ENCODE measurements at regions of chr18 and their contacts with region 1.

Region 1: DNA sequence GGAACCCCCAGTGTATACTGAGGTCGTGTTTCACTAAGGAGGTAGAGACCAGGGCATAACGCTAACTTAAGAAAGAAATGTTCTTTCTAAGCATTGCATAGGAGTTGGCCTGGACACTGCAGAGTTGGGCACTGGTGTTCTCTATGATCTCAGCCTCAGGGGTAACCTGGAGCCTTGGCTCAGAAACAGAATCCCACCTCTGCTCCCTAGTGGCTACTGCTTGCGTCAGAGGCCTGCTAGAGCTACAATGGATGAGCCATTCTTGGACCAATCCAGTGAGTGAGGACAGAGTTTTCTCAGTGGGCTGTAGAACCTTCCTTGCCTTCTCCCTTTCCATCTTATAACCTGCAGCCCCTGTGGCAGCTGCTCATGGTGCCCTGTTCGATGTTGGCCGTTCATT is 324.4 kb upstream of the CELF4 start:
- DNase-seq: no peak
- ATAC-seq: no peak
- H3K4me3 ChIP-seq: no peak overlapping the region
- H3K27ac ChIP-seq: no peak overlapping the region
- H3K4me1 ChIP-seq: no peaks in the 10 kb centered on the region
- H3K27me3 ChIP-seq: no peaks in the 10 kb centered on the region

Region 2: GRCh38 chr18:37962316-37962966 is 72.5 kb after region 1 on chr18:
- intact Hi-C with region 1: loop called in 1 of 4 experiments (anchors 10 kb)
- DNase-seq: no peak
- ATAC-seq: no peak
- H3K4me3 ChIP-seq: no peak overlapping the region
- H3K27ac ChIP-seq: no peak overlapping the region
- H3K4me1 ChIP-seq: no peaks in the 10 kb centered on the region
- H3K27me3 ChIP-seq: no peaks in the 10 kb centered on the region

Region 3: DNA sequence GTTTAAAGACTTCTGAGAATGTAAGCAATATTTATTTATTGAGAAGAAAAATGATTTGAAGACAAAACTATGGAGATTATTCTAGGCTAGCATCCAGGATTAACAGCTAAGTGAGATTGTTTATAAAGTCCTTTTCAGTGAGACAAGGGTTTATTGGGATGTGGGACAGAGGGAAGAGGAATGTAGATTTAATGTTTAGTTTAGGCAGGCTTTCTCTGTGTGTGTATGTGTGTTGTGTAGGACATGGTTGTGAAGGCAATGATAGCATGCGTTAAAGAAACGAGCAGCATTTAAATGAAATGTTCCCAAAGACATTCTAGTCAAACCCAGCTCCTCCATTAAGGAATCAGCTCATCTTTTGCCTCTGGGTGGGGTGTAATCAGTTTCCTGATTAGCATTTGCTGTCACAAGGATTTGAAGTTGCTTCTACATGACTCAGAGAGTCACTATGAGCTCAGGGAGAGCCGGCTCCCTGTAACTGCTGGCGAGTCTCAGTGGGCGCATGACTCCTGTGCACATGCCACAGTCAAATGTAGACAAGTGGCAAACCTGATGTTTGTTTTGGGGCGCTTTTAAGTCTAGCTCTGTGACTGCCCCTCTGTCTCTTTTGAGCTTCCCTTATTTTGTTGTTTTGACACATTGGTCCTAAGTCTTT is 117.8 kb after region 1 on chr18:
- intact Hi-C with region 1: no loop called
- DNase-seq: no peak
- ATAC-seq: no peak
- H3K4me3 ChIP-seq: no peak overlapping the region
- H3K27ac ChIP-seq: no peak overlapping the region
- H3K4me1 ChIP-seq: no peaks in the 10 kb centered on the region
- H3K27me3 ChIP-seq: no peaks in the 10 kb centered on the region

Region 4: DNA sequence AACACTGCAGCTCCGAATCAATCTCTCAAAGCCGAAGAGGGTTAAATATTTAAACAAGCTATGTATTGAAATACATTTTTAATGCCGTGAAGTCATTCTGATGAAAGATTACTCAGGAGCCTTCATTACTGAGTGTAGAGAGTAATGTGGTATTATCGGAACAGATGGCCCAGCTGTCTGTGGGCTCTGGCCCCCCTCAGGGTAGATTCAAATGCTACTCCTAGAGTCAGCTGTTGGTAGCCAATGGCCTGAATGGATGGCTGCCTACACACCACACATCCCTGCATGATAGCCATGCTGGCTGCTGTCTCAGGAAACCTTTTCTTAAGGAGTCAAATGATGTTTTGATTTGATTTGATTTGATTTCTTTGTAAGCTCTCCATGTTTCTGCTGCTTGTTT is 407.9 kb after region 1 on chr18:
- intact Hi-C with region 1: no loop called
- DNase-seq: no peak
- ATAC-seq: no peak
- H3K4me3 ChIP-seq: no peak overlapping the region
- H3K27ac ChIP-seq: no peak overlapping the region
- H3K4me1 ChIP-seq: no peaks in the 10 kb centered on the region
- H3K27me3 ChIP-seq: no peaks in the 10 kb centered on the region

Measured in right cardiac atrium (tissue), 5 donors.